Endothelial cell of umbilical vein (primary cell): ENCODE measurements at regions of chr10 and their contacts with region 1.

Region 1: GRCh38 chr10:74058658-74059057 is 60.7 kb downstream of the VCL start:
- DNase-seq: peak; percentile 39
- H3K4me3 ChIP-seq: no peak overlapping the region
- H3K27ac ChIP-seq: no peak overlapping the region
- H3K4me1 ChIP-seq: peaks cover 34% of the 10 kb centered on the region
- H3K27me3 ChIP-seq: no peaks in the 10 kb centered on the region
- CTCF ChIP-seq: no peak
- POLR2A ChIP-seq: no peak

Region 2: GRCh38 chr10:73920089-73920488 is 138.6 kb before region 1 on chr10:
- CTCF ChIA-PET with region 1: no interaction called
- POLR2A ChIA-PET with region 1: no interaction called
- dilution Hi-C with region 1: no loop called
- intact Hi-C with region 1: no loop called
- DNase-seq: no peak
- H3K4me3 ChIP-seq: no peak overlapping the region
- H3K27ac ChIP-seq: no peak overlapping the region
- H3K4me1 ChIP-seq: no peaks in the 10 kb centered on the region
- H3K27me3 ChIP-seq: no peaks in the 10 kb centered on the region
- CTCF ChIP-seq: no peak
- POLR2A ChIP-seq: no peak

Region 3: DNA sequence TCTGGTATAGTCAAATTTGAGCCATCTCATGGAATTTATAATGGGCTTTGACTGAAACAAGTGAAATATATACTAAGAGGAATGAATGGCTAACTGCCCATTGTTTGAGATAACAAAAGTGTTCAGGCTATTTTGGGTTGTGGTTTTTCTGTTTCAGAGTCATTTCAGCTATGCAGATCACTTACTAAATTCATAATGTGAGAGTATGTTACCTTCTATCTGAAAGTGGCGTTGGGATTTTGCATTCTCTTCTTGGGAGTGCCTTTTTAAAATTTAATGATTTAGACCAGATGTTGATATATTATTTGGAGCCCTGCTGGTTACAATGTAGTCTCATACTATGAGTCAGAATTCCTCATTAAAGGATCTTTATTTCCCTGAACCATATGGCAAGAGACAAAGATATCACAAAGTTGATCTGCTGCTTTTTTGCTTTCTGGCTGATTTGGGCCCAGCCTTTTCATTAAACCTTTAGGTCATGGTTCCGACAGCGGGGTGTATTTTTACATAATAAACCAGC is 50.4 kb before region 1 on chr10:
- CTCF ChIA-PET with region 1: no interaction called
- POLR2A ChIA-PET with region 1: no interaction called
- dilution Hi-C with region 1: no loop called
- intact Hi-C with region 1: loop called (anchors 2 kb)
- DNase-seq: peak; percentile 54
- H3K4me3 ChIP-seq: no peak overlapping the region
- H3K27ac ChIP-seq: peak overlapping the region; percentile 58
- H3K4me1 ChIP-seq: peaks cover 34% of the 10 kb centered on the region
- H3K27me3 ChIP-seq: no peaks in the 10 kb centered on the region
- CTCF ChIP-seq: no peak
- POLR2A ChIP-seq: no peak

Region 4: DNA sequence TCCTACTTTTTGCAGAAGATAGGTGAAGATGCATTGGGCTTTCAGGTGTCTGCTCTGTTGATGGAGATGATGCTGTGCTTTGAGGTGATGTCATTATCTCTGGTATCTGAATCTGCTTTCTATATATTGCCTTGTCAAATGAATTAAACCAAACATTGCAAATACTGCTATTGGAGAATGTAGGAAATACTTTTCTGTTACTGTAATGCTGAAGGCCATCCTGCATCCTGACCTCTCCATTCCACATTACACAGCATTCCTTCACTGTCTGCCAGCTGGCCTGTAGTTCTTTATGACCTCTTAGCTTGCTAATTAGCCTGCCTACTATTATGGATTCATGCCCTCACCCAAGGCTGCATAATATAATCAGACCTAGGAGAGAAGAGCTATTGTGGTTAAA is 12.5 kb after region 1 on chr10:
- CTCF ChIA-PET with region 1: interaction called, 7 read pairs
- POLR2A ChIA-PET with region 1: interaction called, 4 read pairs
- dilution Hi-C with region 1: no loop called
- intact Hi-C with region 1: loop called (anchors 1 kb)
- DNase-seq: peak; percentile 94
- H3K4me3 ChIP-seq: peak overlapping the region in 1 of 3 experiments; percentile 16
- H3K27ac ChIP-seq: peak overlapping the region; percentile 9
- H3K4me1 ChIP-seq: peaks cover 52% of the 10 kb centered on the region
- H3K27me3 ChIP-seq: no peaks in the 10 kb centered on the region
- CTCF ChIP-seq: no peak
- POLR2A ChIP-seq: peak; percentile 35

Region 5: DNA sequence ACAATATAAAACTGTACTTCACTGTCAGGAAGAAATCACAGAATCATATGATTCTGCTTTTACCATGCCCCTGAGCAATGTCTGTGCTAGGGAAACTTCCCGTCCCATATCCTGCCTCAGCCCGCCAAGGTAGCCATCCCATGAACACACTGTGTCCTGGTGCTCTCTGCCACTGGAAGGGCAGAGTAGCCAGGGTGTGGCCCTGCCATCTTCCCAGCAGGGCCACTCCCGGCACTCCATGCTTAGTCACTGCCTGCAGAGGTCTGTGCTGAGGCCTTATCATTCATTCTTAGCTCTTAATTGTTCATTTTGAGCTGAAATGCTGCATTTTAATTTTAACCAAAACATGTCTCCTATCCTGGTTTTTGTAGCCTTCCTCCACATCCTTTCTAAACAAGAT is 60.1 kb after region 1 on chr10:
- CTCF ChIA-PET with region 1: no interaction called
- POLR2A ChIA-PET with region 1: no interaction called
- dilution Hi-C with region 1: no loop called
- intact Hi-C with region 1: no loop called
- DNase-seq: no peak
- H3K4me3 ChIP-seq: no peak overlapping the region
- H3K27ac ChIP-seq: no peak overlapping the region
- H3K4me1 ChIP-seq: peaks cover 5% of the 10 kb centered on the region
- H3K27me3 ChIP-seq: no peaks in the 10 kb centered on the region
- CTCF ChIP-seq: no peak
- POLR2A ChIP-seq: no peak

Region 6: DNA sequence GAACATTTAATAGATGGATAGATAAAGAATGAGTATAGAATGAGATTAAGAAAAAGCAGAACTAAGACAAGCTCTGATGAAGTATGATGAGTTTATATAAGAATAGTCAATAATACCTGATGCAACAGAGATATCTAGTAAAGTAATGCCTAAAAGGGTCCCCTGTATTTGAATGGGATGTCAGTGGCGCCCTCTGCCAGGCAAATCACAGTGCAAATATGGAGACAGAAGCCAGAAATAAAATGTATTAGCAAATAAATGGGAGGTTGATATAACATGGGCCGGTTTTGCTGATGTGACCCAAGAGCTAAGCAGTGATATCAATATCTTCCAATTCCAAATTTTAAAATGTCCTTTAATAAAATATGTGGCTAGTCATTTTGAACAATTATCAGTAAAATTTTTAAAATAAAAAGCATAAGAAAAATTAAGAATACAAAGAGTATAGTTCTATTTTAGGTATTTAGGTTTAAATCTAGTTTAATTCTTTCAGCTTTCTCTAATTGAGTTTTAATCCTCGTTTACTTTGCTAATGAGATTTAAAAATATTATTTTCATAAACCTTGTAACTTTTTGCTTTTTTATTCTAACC is 155.0 kb after region 1 on chr10:
- CTCF ChIA-PET with region 1: no interaction called
- POLR2A ChIA-PET with region 1: no interaction called
- dilution Hi-C with region 1: no loop called
- intact Hi-C with region 1: no loop called
- DNase-seq: peak; percentile 67
- H3K4me3 ChIP-seq: no peak overlapping the region
- H3K27ac ChIP-seq: no peak overlapping the region
- H3K4me1 ChIP-seq: no peaks in the 10 kb centered on the region
- H3K27me3 ChIP-seq: no peaks in the 10 kb centered on the region
- CTCF ChIP-seq: peak; percentile 43 to 50
- POLR2A ChIP-seq: no peak